Mammary epithelial cell (primary cell): ENCODE measurements at regions of chr11 and their contacts with region 1.

Region 1: GRCh38 chr11:119474682-119475596 is 52.0 kb upstream of the THY1 start:
- DNase-seq: peak; percentile 42
- H3K4me3 ChIP-seq: no peak overlapping the region
- H3K27ac ChIP-seq: no peak overlapping the region
- H3K4me1 ChIP-seq: peaks cover 8% of the 10 kb centered on the region
- H3K27me3 ChIP-seq: no peaks in the 10 kb centered on the region
- CTCF ChIP-seq: peak; percentile 91 to 98

Region 2: GRCh38 chr11:119101759-119102423 is 373.0 kb before region 1 on chr11 and contains the start of gene DPAGT1:
- CTCF ChIA-PET with region 1: no interaction called
- dilution Hi-C with region 1: no loop called
- in situ Hi-C with region 1: no loop called
- intact Hi-C with region 1: loop called (anchors 10 kb)
- DNase-seq: peak; percentile 97
- H3K4me3 ChIP-seq: peak within 1 kb of the TSS; percentile 80 to 81 (median 81)
- H3K27ac ChIP-seq: peak within 1 kb of the TSS; percentile 91
- H3K4me1 ChIP-seq: peaks cover 19% of the 10 kb centered on the region
- H3K27me3 ChIP-seq: no peaks in the 10 kb centered on the region
- CTCF ChIP-seq: no peak
- total RNA-seq, gene DPAGT1: 22.2 to 49.3 TPM

Region 3: GRCh38 chr11:119323538-119324033 is 151.4 kb before region 1 on chr11:
- CTCF ChIA-PET with region 1: no interaction called
- dilution Hi-C with region 1: no loop called
- in situ Hi-C with region 1: no loop called
- intact Hi-C with region 1: loop called (anchors 1 kb)
- DNase-seq: peak; percentile 52
- H3K4me3 ChIP-seq: no peak overlapping the region
- H3K27ac ChIP-seq: no peak overlapping the region
- H3K4me1 ChIP-seq: peaks cover 29% of the 10 kb centered on the region
- H3K27me3 ChIP-seq: no peaks in the 10 kb centered on the region
- CTCF ChIP-seq: peak; percentile 78 to 85

Region 4: DNA sequence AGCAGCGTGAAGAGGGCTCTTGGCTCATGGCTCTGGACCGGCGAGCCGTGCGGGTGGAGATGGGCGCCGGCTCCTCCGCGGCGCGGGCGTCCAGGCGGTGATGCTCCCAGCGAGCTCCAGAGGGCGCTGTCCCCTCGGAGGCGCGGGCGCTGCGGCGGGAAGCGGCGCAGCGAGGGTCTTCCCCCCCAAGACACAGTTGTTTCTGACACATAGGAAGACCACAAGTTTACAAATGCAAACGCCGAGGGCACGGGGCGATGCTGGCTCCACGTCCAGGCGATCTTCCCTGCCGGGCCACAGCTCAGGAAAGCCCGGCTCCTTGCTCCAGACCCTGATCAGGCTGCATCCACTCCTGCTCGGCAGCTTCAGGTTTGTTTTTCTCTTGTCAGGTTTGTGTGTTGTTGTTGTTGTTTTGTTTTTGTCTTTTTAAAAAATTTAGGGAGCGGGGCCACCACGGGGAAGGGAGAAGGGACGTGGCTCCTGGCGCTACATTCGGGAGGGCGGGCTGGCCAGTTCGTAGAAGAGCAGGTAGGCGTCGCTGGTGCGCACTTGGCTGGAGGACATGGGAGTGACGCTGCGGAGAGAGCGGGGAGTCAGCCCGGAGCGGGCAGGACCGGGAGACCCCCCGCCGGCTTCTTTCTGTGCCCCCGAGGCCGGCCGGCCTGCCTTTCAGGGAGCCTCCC is 118.4 kb before region 1 on chr11:
- CTCF ChIA-PET with region 1: interaction called, 15 read pairs
- dilution Hi-C with region 1: no loop called
- in situ Hi-C with region 1: loop called in 1 of 2 experiments (anchors 10 kb)
- intact Hi-C with region 1: loop called (anchors 1 kb)
- DNase-seq: no peak
- H3K4me3 ChIP-seq: peak overlapping the region; percentile 25 to 48 (median 32)
- H3K27ac ChIP-seq: no peak overlapping the region
- H3K4me1 ChIP-seq: peaks cover 29% of the 10 kb centered on the region
- H3K27me3 ChIP-seq: no peaks in the 10 kb centered on the region
- CTCF ChIP-seq: peak; percentile 58 to 92

Region 5: GRCh38 chr11:119381181-119381988 is 93.6 kb before region 1 on chr11 and contains the start of gene USP2:
- CTCF ChIA-PET with region 1: interaction called, 11 read pairs
- dilution Hi-C with region 1: loop called (anchors 10 kb)
- in situ Hi-C with region 1: loop called (anchors 5 to 10 kb)
- intact Hi-C with region 1: loop called (anchors 1 kb)
- DNase-seq: peak; percentile 97
- H3K4me3 ChIP-seq: peak within 1 kb of the TSS; percentile 48 to 60 (median 55)
- H3K27ac ChIP-seq: peak within 1 kb of the TSS; percentile 90
- H3K4me1 ChIP-seq: peaks cover 38% of the 10 kb centered on the region
- H3K27me3 ChIP-seq: no peaks in the 10 kb centered on the region
- CTCF ChIP-seq: peak; percentile 62 to 89
- total RNA-seq, gene USP2: 2.7 to 3.0 TPM

Region 6: GRCh38 chr11:119427279-119427678 is 47.7 kb before region 1 on chr11:
- CTCF ChIA-PET with region 1: interaction called, 5 read pairs
- dilution Hi-C with region 1: loop called (anchors 5 kb)
- in situ Hi-C with region 1: no loop called
- intact Hi-C with region 1: no loop called
- DNase-seq: no peak
- H3K4me3 ChIP-seq: no peak overlapping the region
- H3K27ac ChIP-seq: no peak overlapping the region
- H3K4me1 ChIP-seq: peaks cover 12% of the 10 kb centered on the region
- H3K27me3 ChIP-seq: no peaks in the 10 kb centered on the region
- CTCF ChIP-seq: no peak

Region 7: GRCh38 chr11:119496469-119496868 is 21.5 kb after region 1 on chr11:
- CTCF ChIA-PET with region 1: no interaction called
- dilution Hi-C with region 1: no loop called
- in situ Hi-C with region 1: no loop called
- intact Hi-C with region 1: no loop called
- DNase-seq: no peak
- H3K4me3 ChIP-seq: no peak overlapping the region
- H3K27ac ChIP-seq: no peak overlapping the region
- H3K4me1 ChIP-seq: no peaks in the 10 kb centered on the region
- H3K27me3 ChIP-seq: no peaks in the 10 kb centered on the region
- CTCF ChIP-seq: no peak

Region 8: DNA sequence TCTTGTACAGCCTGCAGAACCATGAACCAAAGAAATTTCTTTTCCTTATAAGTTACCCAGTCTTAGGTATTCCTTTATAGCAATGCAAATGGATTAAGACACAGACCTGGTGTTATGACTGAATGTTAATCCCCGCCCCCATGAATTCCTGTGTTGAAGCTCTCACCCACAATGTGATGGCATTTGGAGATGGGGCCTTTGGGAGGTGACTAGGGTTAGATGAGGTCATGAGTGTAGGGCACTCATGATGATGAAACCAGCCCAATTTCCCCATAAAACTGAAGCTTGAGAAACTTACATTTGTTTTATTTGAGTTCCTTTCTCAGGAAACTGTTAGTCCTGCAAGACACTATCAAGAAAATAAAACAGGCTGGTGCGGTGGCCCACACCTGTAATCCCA is 63.8 kb after region 1 on chr11:
- CTCF ChIA-PET with region 1: no interaction called
- dilution Hi-C with region 1: no loop called
- in situ Hi-C with region 1: no loop called
- intact Hi-C with region 1: no loop called
- DNase-seq: no peak
- H3K4me3 ChIP-seq: no peak overlapping the region
- H3K27ac ChIP-seq: no peak overlapping the region
- H3K4me1 ChIP-seq: no peaks in the 10 kb centered on the region
- H3K27me3 ChIP-seq: no peaks in the 10 kb centered on the region
- CTCF ChIP-seq: no peak

Region 9: DNA sequence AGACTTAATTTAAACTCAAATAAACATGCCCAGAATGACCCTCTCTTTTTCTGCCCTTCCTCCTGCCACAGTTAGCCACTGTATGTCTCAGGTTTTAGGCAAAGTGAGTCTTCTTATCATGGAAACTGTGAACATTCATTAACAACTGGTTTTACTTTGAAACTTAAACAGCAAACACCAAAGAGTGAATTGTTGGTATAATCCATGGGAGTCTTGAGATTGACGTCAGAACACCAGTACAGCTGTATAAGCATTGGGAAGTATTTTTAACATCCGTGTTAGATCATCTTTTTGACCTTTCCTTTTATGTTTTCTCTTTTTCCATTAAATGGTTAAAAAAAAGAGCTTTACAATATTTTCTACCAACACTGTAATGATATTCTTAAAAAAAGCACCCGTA is 900.1 kb after region 1 on chr11:
- CTCF ChIA-PET with region 1: no interaction called
- dilution Hi-C with region 1: no loop called
- in situ Hi-C with region 1: no loop called
- intact Hi-C with region 1: no loop called
- DNase-seq: no peak
- H3K4me3 ChIP-seq: no peak overlapping the region
- H3K27ac ChIP-seq: no peak overlapping the region
- H3K4me1 ChIP-seq: no peaks in the 10 kb centered on the region
- H3K27me3 ChIP-seq: no peaks in the 10 kb centered on the region
- CTCF ChIP-seq: no peak